H1 (cell line): ENCODE measurements at regions of chr6 and their contacts with region 1.

Region 1: DNA sequence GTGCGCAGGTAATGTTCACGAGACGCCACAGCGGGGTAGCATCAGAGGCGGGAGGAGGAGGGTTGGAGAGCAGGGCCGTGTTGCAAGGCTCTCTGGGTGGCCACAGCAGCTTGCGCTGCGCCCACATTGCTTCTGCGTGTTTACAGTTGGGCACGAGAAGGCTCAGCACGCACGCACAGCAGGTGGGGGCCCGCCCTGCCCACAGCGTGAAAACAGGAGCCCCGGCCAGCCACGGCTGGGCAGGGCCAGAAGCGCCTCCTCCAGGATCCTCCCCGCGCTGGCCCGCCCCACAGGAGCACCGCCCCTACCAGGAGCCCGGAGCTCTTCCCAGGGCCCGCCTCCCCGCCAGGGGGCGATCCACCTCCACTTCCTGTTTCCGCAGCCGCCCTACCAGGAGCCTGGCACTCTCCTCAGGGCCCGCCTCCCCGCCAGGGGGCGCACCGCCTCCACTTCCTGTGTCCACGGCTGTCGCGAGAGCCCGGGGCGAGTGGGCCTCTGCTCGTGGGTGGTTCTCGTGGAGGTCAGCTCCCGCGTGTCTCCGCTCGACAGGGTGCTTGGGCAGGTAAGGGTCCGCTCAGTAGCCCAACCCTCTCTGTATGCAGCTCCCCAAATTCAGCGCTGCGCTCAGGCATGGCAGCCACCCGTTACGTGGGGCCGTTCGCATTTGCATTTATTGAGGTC is at the start of gene FAM50B:
- DNase-seq: peak; percentile 64 to 99
- H3K4me3 ChIP-seq: peak within 1 kb of the TSS; percentile 46 to 71 (median 60)
- H3K27ac ChIP-seq: no peak within 1 kb of the TSS
- H3K4me1 ChIP-seq: peaks cover 0 to 10% (median 4%) of the 10 kb centered on the region in 4 experiments; a peak in 5 of 7 replicates
- H3K27me3 ChIP-seq: 0 out of 7 replicates have a peak, but pooled peaks cover 0 to 2% (median 0%) of the 10 kb centered on the region in 4 experiments
- CTCF ChIP-seq: peak; percentile 91 to 99 (median 95)
- EP300 ChIP-seq: no peak
- POLR2A ChIP-seq: peak in 1 of 2 experiments; percentile 50; a peak in 1 of 3 replicates
- RAD21 ChIP-seq: peak; percentile 85 to 89
- total RNA-seq, gene FAM50B: 3.1 and 3.8 TPM in 2 replicates

Region 2: DNA sequence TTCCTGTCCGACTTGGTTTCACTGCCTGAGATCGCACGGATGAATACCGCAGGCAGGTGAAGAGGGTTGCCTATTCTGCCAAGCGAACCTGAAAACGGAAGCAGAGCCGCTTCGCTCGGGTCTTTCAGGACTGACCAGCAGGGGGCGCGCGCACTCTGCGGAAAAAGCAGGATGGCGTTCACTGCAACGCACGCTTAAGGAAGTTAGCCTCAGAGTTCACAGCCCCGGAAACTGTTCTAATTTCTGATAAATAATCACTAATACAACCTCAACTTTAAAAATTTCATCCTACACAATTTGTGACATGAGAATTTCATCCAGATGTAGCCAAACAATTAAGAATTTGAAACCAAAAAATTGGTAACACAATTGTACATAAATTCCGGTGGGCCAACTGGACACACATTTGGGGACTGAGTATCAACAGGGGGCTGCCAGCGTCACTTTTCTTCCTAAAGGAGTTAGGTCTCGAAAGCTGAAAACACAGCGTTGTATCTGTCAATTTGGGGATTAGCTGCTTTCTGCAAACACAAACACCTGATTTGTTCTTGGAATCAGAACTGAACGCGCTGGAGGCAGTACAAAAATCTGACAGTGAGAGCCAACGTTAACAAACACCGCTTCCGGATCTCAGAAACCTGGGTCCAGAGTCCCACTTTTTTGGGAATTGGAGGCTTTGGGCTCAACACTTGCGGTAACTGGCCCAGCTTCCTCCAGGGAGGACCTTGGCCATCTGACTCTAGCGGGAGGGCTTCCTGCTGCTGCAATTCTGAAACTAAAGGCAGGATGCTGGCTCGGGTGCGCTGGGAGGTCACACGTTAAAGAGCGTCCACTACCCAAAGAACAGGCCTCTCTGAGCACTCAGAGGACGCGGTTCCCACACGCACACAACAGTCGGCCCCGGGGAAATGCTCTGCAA is 106.4 kb before region 1 on chr6:
- CTCF ChIA-PET with region 1: interaction called, 47 read pairs
- POLR2A ChIA-PET with region 1: interaction called, 4 read pairs
- DNase-seq: peak; percentile 60 to 98
- H3K4me3 ChIP-seq: no peak overlapping the region
- H3K27ac ChIP-seq: no peak overlapping the region
- H3K4me1 ChIP-seq: peaks cover 0 to 9% (median 4%) of the 10 kb centered on the region in 4 experiments; a peak in 5 of 7 replicates
- H3K27me3 ChIP-seq: peaks cover 0 to 2% (median 0%) of the 10 kb centered on the region in 4 experiments; a peak in 1 of 7 replicates
- CTCF ChIP-seq: peak in 2 of 3 experiments; percentile 91 to 94; a peak in 3 of 4 replicates
- EP300 ChIP-seq: no peak
- POLR2A ChIP-seq: no peak
- RAD21 ChIP-seq: peak; percentile 96 to 97

Region 3: DNA sequence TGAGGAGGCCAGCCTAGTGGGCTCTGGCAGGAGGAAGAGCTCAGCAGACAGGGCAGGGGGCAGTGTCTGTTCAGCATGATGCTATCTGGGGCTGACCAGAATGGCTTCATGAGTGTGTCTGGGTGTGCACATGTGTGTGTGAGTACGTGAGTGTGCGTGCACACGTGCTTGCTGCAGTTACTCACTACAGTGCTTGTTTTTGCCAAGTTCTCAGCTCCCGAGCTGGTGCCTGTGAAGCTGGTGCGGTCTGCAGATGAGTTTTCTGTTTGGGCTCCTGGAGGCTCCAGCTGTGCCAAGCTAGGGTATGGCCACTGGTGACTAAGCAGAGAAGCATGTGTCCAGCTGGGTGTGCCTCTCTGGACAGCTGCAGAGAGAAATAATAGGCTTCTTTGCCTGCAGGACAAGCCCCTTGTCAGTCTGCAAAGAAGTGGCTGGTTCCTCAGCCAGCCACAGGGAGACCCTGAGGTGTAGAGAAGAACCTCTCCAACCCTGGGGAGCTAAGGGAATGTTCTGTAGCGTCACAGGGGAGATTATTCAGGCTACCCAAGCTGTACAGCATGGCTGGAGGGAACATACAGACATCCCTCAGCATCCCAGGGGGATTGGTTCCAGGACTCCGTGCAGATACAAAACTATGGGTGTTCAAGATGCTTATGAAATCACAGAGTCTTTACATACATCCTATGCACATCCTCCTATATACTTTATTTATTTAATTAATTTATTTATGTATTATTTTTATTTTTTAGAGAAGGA is 40.1 kb before region 1 on chr6:
- CTCF ChIA-PET with region 1: interaction called, 11 read pairs
- POLR2A ChIA-PET with region 1: no interaction called
- DNase-seq: no peak
- H3K4me3 ChIP-seq: no peak overlapping the region
- H3K27ac ChIP-seq: no peak overlapping the region
- H3K4me1 ChIP-seq: peaks cover 0 to 3% (median 0%) of the 10 kb centered on the region in 4 experiments; a peak in 2 of 7 replicates
- H3K27me3 ChIP-seq: no peaks in the 10 kb centered on the region
- CTCF ChIP-seq: no peak
- EP300 ChIP-seq: no peak
- POLR2A ChIP-seq: no peak
- RAD21 ChIP-seq: no peak

Region 4: GRCh38 chr6:3868544-3868943 is 19.5 kb after region 1 on chr6:
- CTCF ChIA-PET with region 1: interaction called, 24 read pairs
- POLR2A ChIA-PET with region 1: interaction called, 3 read pairs
- DNase-seq: no peak
- H3K4me3 ChIP-seq: no peak overlapping the region
- H3K27ac ChIP-seq: no peak overlapping the region
- H3K4me1 ChIP-seq: peaks cover 0 to 3% (median 0%) of the 10 kb centered on the region in 4 experiments; a peak in 1 of 7 replicates
- H3K27me3 ChIP-seq: no peaks in the 10 kb centered on the region
- CTCF ChIP-seq: no peak
- EP300 ChIP-seq: no peak
- POLR2A ChIP-seq: no peak
- RAD21 ChIP-seq: no peak

Region 5: GRCh38 chr6:3905945-3906845 is 57.1 kb after region 1 on chr6:
- CTCF ChIA-PET with region 1: interaction called, 28 read pairs
- POLR2A ChIA-PET with region 1: interaction called, 3 read pairs
- DNase-seq: no peak
- H3K4me3 ChIP-seq: no peak overlapping the region; a peak in 1 of 8 replicates
- H3K27ac ChIP-seq: no peak overlapping the region
- H3K4me1 ChIP-seq: peaks cover 7 to 19% (median 14%) of the 10 kb centered on the region in 4 experiments
- H3K27me3 ChIP-seq: no peaks in the 10 kb centered on the region; a peak in 2 of 7 replicates
- CTCF ChIP-seq: no peak
- EP300 ChIP-seq: no peak
- POLR2A ChIP-seq: no peak
- RAD21 ChIP-seq: no peak

Region 6: GRCh38 chr6:3943331-3943765 is 94.3 kb after region 1 on chr6:
- CTCF ChIA-PET with region 1: interaction called, 42 read pairs
- POLR2A ChIA-PET with region 1: no interaction called
- DNase-seq: no peak
- H3K4me3 ChIP-seq: no peak overlapping the region
- H3K27ac ChIP-seq: no peak overlapping the region
- H3K4me1 ChIP-seq: no peaks in the 10 kb centered on the region; a peak in 1 of 7 replicates
- H3K27me3 ChIP-seq: no peaks in the 10 kb centered on the region
- CTCF ChIP-seq: no peak
- EP300 ChIP-seq: no peak
- POLR2A ChIP-seq: no peak
- RAD21 ChIP-seq: no peak

Region 7: DNA sequence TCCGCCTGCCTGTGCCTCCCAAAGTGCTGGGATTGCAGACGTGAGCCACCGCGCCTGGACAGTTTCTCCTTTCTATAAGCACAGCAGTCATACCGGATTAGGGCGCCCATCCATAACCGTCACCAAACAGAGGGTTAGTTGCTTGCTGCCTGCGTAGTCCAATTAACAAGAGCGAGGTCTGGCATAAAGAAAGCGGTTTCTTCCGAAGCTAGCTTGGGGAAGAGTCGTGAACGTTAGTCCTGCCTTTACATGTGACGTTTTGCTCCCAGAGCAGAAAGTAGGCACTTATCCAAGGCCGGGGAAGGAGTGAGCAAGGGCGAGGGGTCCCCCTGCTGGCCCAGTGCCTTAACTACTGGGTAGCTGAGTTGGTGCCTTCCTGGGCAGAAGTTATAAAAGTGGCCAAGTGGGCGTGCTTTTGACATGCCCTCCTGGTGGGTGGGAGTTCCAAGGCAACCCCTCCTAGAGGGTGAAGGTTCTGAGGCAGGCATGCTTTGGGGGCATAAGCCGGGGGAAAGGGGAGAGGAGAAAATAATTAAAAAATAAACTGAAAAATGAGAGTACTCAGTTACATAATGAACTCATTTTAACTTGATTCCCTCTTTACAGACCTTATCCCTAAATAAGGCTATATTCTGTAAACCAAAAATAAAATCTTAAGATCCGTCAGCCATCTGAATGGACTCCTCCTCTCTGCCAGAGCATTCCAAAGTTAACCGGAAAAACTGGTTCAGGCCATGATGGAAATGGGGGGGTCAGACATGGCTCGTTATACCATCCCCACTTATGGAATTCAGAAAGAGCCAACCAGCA is 141.8 kb after region 1 on chr6:
- CTCF ChIA-PET with region 1: interaction called, 39 read pairs
- POLR2A ChIA-PET with region 1: interaction called, 4 read pairs
- DNase-seq: peak; percentile 73 to 93
- H3K4me3 ChIP-seq: no peak overlapping the region; a peak in 1 of 8 replicates
- H3K27ac ChIP-seq: no peak overlapping the region
- H3K4me1 ChIP-seq: peaks cover 2 to 14% (median 8%) of the 10 kb centered on the region in 4 experiments; a peak in 5 of 7 replicates
- H3K27me3 ChIP-seq: no peaks in the 10 kb centered on the region
- CTCF ChIP-seq: peak; percentile 91 to 98 (median 93)
- EP300 ChIP-seq: no peak
- POLR2A ChIP-seq: no peak
- RAD21 ChIP-seq: peak; percentile 90 to 96